PC-9 (cell line): ENCODE measurements at regions of chr7 and their contacts with region 1.

Region 1: GRCh38 chr7:138854115-138854645 is 56.2 kb upstream of the ATP6V0A4 start:
- DNase-seq: peak in 1 of 2 experiments; percentile 92
- H3K4me3 ChIP-seq: no peak overlapping the region
- H3K27ac ChIP-seq: peak overlapping the region; percentile 54
- H3K4me1 ChIP-seq: peaks cover 32% of the 10 kb centered on the region
- H3K27me3 ChIP-seq: no peaks in the 10 kb centered on the region
- CTCF ChIP-seq: no peak

Region 2: GRCh38 chr7:138645290-138645689 is 208.9 kb before region 1 on chr7:
- CTCF ChIA-PET with region 1: no interaction called
- POLR2A ChIA-PET with region 1: no interaction called
- intact Hi-C with region 1: no loop called
- DNase-seq: no peak
- H3K4me3 ChIP-seq: no peak overlapping the region
- H3K27ac ChIP-seq: no peak overlapping the region
- H3K4me1 ChIP-seq: peaks cover 9% of the 10 kb centered on the region; the same call in 1 of the 2 replicates
- H3K27me3 ChIP-seq: no peaks in the 10 kb centered on the region
- CTCF ChIP-seq: no peak; the same call in 1 of the 2 replicates

Region 3: DNA sequence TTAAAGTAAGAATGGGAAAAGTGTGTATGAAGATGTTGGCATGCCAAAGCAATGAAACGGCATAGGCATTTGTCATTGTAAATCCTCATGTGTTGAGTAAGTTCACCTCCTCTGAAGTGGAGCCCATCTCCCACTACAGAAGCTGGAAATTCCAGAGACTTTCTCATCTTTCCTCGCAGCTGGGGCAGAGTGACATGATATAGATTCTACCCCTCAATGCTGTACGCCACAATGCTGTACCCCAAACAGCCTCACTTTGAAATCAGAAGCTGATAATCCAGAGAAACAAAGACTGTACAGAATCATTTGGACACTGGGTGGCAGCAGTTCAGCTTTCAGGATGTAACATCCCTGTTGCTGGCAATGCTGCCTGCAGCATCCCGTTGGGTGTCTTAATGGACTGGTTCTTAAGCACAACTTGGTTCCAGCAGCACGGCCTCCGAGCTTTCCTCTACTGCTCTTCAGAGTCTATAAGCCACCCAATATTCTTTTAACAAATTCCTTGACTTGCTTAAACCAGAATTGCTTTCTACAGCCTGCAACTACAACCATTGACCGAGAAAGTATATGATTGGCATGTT is 162.8 kb after region 1 on chr7:
- CTCF ChIA-PET with region 1: no interaction called
- POLR2A ChIA-PET with region 1: no interaction called
- intact Hi-C with region 1: no loop called
- DNase-seq: peak; percentile 51 to 56
- H3K4me3 ChIP-seq: no peak overlapping the region
- H3K27ac ChIP-seq: no peak overlapping the region
- H3K4me1 ChIP-seq: no peaks in the 10 kb centered on the region
- H3K27me3 ChIP-seq: no peaks in the 10 kb centered on the region
- CTCF ChIP-seq: peak; percentile 83

Region 4: GRCh38 chr7:139241258-139241657 is 387.1 kb after region 1 on chr7:
- CTCF ChIA-PET with region 1: no interaction called
- POLR2A ChIA-PET with region 1: interaction called, 21 read pairs
- intact Hi-C with region 1: no loop called
- DNase-seq: no peak
- H3K4me3 ChIP-seq: no peak overlapping the region
- H3K27ac ChIP-seq: no peak overlapping the region
- H3K4me1 ChIP-seq: peaks cover 44% of the 10 kb centered on the region
- H3K27me3 ChIP-seq: no peaks in the 10 kb centered on the region
- CTCF ChIP-seq: no peak